ENCODE measurements at regions of chr15 and their contacts with region 1.

Region 1: DNA sequence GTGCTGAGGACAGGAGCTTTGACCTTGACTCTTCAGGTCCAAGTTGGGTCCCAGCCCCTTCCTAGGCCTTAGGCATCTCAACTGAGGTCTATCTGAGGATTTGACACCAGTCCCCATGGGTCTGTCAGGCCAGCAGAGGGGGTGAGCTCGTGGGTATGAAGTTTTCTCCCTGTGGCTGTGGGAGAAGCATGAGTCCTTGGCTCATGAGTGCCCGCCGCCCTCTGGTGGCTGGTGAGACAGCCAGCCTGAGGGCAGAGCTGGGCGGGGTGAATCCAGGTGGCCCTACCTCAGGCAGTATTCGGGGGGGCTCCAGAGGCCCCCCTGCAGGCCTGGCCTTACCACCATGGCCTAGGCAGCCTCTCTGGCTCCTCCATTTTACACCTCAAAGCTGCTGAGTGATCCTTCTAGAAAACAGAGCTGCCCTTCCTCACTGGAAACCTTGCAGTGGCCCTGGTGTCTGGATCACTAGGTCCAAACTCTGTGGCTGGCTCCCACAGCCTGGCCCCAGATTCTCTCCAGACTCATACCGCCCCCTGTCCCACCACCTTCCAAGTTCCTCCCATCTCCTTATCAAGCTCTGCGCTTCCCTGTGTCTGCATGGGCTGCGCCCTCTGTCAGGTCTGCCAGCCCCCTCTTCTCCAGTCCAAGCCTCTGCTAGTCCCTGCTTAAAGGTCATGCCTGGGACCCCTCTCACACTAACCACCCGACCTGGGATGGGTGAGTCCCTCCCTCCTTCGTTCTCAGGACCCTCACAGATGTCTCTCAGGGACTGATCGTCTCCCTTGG is 16.1 kb downstream of the SH2D7 start:
- DNase-seq: peak; percentile 91
- H3K4me3 ChIP-seq: no peak overlapping the region
- H3K27ac ChIP-seq: no peak overlapping the region
- H3K4me1 ChIP-seq: no peaks in the 10 kb centered on the region
- H3K27me3 ChIP-seq: no peaks in the 10 kb centered on the region
- CTCF ChIP-seq: peak; percentile 96

Region 2: DNA sequence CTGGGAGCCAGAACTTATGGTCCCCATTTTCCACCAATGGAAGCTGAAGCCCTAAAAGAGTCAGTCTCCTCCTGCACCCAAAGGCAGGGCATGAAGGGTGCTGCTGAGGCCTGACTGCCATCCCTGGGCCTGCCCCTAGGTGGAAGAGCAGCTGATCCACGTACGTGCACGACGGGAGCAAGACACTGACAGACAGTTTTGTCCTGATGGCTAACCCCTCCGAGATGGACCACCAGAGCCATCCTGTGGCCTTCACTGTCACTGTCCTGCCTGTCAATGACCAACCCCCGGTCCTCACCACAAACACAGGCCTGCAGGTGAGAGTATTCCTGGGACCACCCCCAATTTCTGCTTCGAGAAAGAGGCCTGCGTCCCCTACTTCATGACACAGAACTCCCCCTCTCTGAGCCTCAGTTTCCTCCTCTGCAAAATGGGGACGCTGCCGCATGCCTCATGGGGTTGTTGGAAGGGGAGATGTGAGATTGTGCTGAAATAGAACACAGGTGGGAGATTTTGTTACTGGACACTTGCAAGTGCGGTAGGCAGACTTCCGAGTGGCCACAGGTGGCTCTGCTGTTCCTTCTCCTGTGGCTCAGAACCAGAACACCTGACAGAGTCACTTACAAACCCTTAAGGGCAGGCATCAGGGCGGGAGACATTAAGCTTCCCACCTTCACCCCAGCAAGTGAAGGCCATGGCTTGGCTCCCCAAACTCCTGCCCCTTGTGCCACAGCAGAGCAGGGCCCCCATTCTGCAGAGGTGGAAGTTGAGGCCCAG is 206.3 kb before region 1 on chr15:
- CTCF ChIA-PET with region 1: interaction called, 3 read pairs
- POLR2A ChIA-PET with region 1: no interaction called
- intact Hi-C with region 1: loop called (anchors 2 kb)
- DNase-seq: no peak
- H3K4me3 ChIP-seq: no peak overlapping the region
- H3K27ac ChIP-seq: no peak overlapping the region
- H3K4me1 ChIP-seq: no peaks in the 10 kb centered on the region
- H3K27me3 ChIP-seq: no peaks in the 10 kb centered on the region
- CTCF ChIP-seq: no peak

Region 3: GRCh38 chr15:77959432-77959879 is 149.0 kb before region 1 on chr15:
- CTCF ChIA-PET with region 1: interaction called, 20 read pairs
- POLR2A ChIA-PET with region 1: no interaction called
- intact Hi-C with region 1: loop called (anchors 2 kb)
- DNase-seq: peak; percentile 80
- H3K4me3 ChIP-seq: peak overlapping the region; percentile 35
- H3K27ac ChIP-seq: no peak overlapping the region
- H3K4me1 ChIP-seq: no peaks in the 10 kb centered on the region
- H3K27me3 ChIP-seq: no peaks in the 10 kb centered on the region
- CTCF ChIP-seq: peak; percentile 94

Region 4: DNA sequence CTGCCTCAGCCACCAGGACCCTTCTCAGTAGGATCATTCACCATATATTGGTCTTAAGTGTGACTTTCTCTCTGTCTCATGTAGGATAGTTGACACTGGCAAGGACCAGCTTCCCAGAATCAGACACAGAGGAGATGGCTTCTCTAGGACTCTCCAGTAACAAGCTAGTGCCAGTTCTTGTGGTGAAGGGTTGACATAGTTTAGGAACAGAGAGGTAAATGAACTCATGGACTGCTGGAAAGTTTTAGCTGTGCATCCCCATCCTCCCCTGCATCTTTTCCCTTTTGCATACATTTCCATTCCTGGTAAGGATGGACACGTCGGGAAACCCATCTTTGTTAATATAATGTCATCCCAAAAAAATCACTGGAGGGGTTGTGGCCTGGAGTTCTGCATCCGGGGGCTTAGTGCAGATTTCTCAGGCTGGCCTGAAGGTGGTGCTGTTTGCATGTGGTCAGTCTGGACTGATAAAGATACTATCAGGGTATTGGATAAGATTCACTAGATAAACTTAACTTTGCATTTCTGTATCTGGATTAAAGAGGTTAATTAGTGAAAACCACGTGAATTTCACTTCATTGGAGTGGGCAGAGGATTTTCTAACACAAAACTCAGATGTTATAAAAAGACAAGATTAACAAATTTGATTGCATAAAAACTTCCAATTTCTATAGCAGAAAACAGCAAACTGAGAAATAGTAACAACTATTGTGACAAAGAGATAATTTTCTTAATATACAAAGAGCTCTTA is 141.8 kb before region 1 on chr15:
- CTCF ChIA-PET with region 1: interaction called, 19 read pairs
- POLR2A ChIA-PET with region 1: no interaction called
- intact Hi-C with region 1: loop called (anchors 1 kb)
- DNase-seq: peak; percentile 56
- H3K4me3 ChIP-seq: no peak overlapping the region
- H3K27ac ChIP-seq: no peak overlapping the region
- H3K4me1 ChIP-seq: peaks cover 2% of the 10 kb centered on the region
- H3K27me3 ChIP-seq: no peaks in the 10 kb centered on the region
- CTCF ChIP-seq: peak; percentile 96

Region 5: GRCh38 chr15:78000091-78000926 is 108.2 kb before region 1 on chr15:
- CTCF ChIA-PET with region 1: interaction called, 18 read pairs
- POLR2A ChIA-PET with region 1: no interaction called
- intact Hi-C with region 1: loop called (anchors 1 kb)
- DNase-seq: peak; percentile 77
- H3K4me3 ChIP-seq: no peak overlapping the region
- H3K27ac ChIP-seq: no peak overlapping the region
- H3K4me1 ChIP-seq: no peaks in the 10 kb centered on the region
- H3K27me3 ChIP-seq: no peaks in the 10 kb centered on the region
- CTCF ChIP-seq: peak; percentile 77

Region 6: GRCh38 chr15:78093242-78094020 is 15.1 kb before region 1 on chr15:
- CTCF ChIA-PET with region 1: no interaction called
- POLR2A ChIA-PET with region 1: no interaction called
- intact Hi-C with region 1: no loop called
- DNase-seq: no peak
- H3K4me3 ChIP-seq: no peak overlapping the region
- H3K27ac ChIP-seq: no peak overlapping the region
- H3K4me1 ChIP-seq: no peaks in the 10 kb centered on the region
- H3K27me3 ChIP-seq: no peaks in the 10 kb centered on the region
- CTCF ChIP-seq: no peak

Region 7: DNA sequence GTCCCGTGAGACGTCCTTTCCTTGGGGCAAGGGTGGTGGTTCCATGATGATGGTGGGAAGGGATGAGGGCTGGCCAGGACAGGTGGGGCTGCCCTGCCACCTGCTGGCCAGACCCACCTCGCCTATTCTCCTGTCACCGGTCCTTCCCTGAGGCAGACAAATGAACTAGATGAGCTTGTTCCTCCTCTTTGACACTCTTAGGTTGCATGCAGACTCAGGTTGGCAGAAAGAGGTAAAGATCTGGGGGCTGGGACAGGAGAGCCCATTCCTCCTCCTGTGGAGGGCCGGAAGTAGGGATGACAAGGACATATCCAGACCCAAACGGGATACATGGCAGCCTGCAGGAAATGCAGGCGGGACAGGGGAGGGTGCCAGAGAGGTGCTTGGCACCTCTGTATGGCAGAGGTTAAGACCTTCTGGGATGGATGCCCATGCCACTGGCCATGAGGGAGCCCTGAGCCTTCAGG is 87.3 kb after region 1 on chr15:
- CTCF ChIA-PET with region 1: interaction called, 7 read pairs
- POLR2A ChIA-PET with region 1: no interaction called
- intact Hi-C with region 1: loop called (anchors 2 kb)
- DNase-seq: peak; percentile 15
- H3K4me3 ChIP-seq: no peak overlapping the region
- H3K27ac ChIP-seq: no peak overlapping the region
- H3K4me1 ChIP-seq: no peaks in the 10 kb centered on the region
- H3K27me3 ChIP-seq: no peaks in the 10 kb centered on the region
- CTCF ChIP-seq: peak; percentile 61

Region 8: GRCh38 chr15:78241007-78241406 is 132.5 kb after region 1 on chr15:
- CTCF ChIA-PET with region 1: interaction called, 5 read pairs
- POLR2A ChIA-PET with region 1: no interaction called
- intact Hi-C with region 1: loop called (anchors 1 kb)
- DNase-seq: peak; percentile 80
- H3K4me3 ChIP-seq: no peak overlapping the region
- H3K27ac ChIP-seq: no peak overlapping the region
- H3K4me1 ChIP-seq: no peaks in the 10 kb centered on the region
- H3K27me3 ChIP-seq: no peaks in the 10 kb centered on the region
- CTCF ChIP-seq: peak; percentile 87

Measured in A673 (cell line).